ENCODE measurements at regions of chr3 and their contacts with region 1.

Region 1: DNA sequence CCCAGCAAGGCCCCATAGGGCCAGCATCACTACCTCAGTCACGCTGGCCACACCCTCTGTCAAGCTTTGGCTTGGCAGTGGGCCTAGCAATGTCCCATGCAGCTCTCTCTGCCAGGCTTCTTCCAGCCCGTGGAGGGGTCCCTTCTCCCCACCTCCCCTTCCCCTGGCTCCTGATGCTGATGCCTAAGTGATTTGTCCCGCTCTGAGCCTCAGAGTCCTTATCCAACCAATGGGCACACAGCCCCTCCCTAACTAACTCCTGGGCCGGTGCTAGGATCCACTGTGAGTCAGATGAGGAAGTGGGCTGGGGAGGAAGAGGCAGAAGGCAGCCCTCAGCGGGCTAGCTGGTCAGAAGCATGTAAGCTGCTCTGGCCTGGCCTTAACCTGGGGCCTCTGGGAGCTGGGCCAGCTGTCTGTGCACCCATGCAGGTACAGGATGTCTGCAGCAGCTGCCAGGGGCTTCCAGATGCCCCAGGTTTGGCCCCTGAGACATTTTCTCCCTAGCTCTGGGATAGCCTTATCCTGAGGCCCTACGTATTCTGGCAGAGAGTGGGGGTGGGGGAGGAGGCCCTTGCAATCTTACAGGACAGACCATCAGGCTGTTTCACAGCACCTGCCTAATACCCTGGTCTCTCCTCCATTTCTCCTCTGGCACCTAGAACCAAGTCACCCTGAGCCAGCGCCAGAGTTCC is 740 bp upstream of the ZBTB47 start:
- DNase-seq: no peak
- ATAC-seq: peak; percentile 76
- H3K4me3 ChIP-seq: no peak overlapping the region
- H3K4me3 Mint-ChIP-seq: peak overlapping the region in 9 of 10 donors; percentile 66 to 91 (median 82)
- H3K27ac ChIP-seq: no peak overlapping the region
- H3K27ac Mint-ChIP-seq: peak overlapping the region in 3 of 9 donors; percentile 32 to 57 (median 48)
- H3K4me1 ChIP-seq: peaks cover 5 to 12% of the 10 kb centered on the region in 2 donors
- H3K4me1 Mint-ChIP-seq: peaks cover 9 to 22% (median 12%) of the 10 kb centered on the region in 7 donors
- H3K27me3 ChIP-seq: no peaks in the 10 kb centered on the region
- H3K27me3 Mint-ChIP-seq: peaks cover 0 to 4% (median 0%) of the 10 kb centered on the region in 5 donors

Region 2: DNA sequence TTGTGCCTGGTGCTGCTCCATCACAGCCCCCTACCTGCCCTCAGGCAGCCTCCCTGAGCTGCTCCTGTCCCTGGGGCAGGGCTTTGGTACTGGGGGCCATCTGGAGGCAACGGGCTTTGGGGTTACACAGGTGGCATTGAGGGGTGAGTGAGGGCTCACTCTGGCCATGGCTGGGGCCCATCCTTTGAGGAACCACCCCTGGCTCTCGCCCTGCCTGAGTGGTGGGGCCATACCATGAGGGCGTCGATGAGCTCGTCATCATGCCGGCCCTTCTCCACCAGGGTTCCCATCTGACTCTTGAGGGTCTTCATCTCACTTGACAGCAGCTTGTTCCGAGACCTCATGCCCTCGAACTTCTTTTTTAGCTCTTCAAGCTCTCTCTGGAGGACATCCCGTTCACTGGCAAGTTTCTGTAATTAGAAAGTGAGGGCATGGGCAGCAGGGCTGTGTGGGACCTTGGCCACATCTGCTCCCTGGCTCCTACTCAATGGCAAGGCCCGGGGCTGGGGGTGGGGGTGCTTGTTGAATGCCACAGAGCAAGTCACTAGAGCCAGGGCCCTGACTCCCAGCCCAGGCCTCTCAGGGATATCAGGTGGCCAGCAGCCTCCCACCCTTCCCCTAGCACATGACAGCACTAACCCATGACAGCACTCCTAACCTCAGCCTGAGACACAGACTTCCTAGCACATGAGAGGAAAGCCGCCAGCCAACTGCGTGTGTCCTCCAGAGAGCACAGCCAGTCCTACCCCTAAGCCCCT is 86.8 kb after region 1 on chr3:
- CTCF ChIA-PET with region 1: no interaction called
- POLR2A ChIA-PET with region 1: no interaction called
- intact Hi-C with region 1: loop called in 1 of 2 experiments (anchors 5 kb)
- DNase-seq: peak in 1 of 9 donors; percentile 13
- ATAC-seq: no peak
- H3K4me3 ChIP-seq: no peak overlapping the region
- H3K4me3 Mint-ChIP-seq: no peak overlapping the region
- H3K27ac ChIP-seq: no peak overlapping the region
- H3K27ac Mint-ChIP-seq: no peak overlapping the region
- H3K4me1 ChIP-seq: no peaks in the 10 kb centered on the region
- H3K4me1 Mint-ChIP-seq: peaks cover 0 to 9% (median 5%) of the 10 kb centered on the region in 7 donors
- H3K27me3 ChIP-seq: no peaks in the 10 kb centered on the region
- H3K27me3 Mint-ChIP-seq: peaks cover 0 to 8% (median 0%) of the 10 kb centered on the region in 5 donors

Region 3: DNA sequence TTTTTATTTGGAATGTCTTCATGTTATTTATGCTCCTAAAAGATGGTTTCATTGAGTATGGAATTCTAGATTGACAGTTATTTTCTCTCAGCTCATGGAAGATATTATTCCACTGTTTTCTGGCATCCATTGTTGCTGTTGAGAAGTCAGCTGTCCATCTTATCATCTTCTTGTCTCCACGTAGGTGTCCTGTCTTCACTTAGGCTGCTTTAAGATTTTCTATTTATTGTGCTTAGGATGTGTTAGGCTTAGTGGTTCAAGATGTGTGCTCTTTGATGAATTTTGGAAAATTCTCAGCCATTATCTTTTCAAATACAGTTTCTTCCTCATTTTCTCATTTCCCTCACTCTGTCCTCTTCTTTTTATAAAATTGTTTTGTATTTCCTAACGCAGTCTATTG is 685.5 kb after region 1 on chr3:
- CTCF ChIA-PET with region 1: no interaction called
- POLR2A ChIA-PET with region 1: no interaction called
- intact Hi-C with region 1: no loop called
- DNase-seq: peak in 1 of 9 donors; percentile 17
- ATAC-seq: no peak
- H3K4me3 ChIP-seq: no peak overlapping the region
- H3K4me3 Mint-ChIP-seq: no peak overlapping the region
- H3K27ac ChIP-seq: no peak overlapping the region
- H3K27ac Mint-ChIP-seq: peak overlapping the region in 5 of 9 donors; percentile 8 to 85 (median 53)
- H3K4me1 ChIP-seq: peaks cover 10 to 19% of the 10 kb centered on the region in 2 donors
- H3K4me1 Mint-ChIP-seq: peaks cover 8 to 28% (median 18%) of the 10 kb centered on the region in 7 donors
- H3K27me3 ChIP-seq: no peaks in the 10 kb centered on the region
- H3K27me3 Mint-ChIP-seq: no peaks in the 10 kb centered on the region

Region 4: DNA sequence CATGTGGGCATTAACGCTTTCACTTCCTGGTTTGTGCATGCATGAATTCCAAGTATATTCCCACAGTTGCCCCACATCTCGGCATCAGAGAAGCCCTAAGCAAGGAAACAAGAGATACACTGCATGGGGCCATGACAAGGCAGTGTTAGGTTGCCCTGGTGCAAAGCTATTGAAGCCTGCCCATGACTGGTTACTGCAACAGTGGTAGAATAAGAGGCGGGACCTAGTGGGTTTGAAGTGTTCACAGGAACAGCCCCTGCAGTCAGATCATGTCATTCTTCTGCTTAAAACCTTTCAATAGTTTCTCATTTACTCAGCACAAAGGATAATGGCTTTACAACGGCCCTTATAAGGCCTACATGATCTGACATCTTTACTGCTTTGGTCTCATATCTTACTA is 1508.1 kb after region 1 on chr3:
- CTCF ChIA-PET with region 1: no interaction called
- POLR2A ChIA-PET with region 1: no interaction called
- intact Hi-C with region 1: no loop called
- DNase-seq: no peak
- ATAC-seq: no peak
- H3K4me3 ChIP-seq: no peak overlapping the region
- H3K4me3 Mint-ChIP-seq: no peak overlapping the region
- H3K27ac ChIP-seq: no peak overlapping the region
- H3K27ac Mint-ChIP-seq: no peak overlapping the region
- H3K4me1 ChIP-seq: no peaks in the 10 kb centered on the region
- H3K4me1 Mint-ChIP-seq: no peaks in the 10 kb centered on the region
- H3K27me3 ChIP-seq: no peaks in the 10 kb centered on the region
- H3K27me3 Mint-ChIP-seq: peaks cover 9 to 41% (median 27%) of the 10 kb centered on the region in 5 donors